H1 (cell line): ENCODE measurements at regions of chr1 and their contacts with region 1.

Region 1: DNA sequence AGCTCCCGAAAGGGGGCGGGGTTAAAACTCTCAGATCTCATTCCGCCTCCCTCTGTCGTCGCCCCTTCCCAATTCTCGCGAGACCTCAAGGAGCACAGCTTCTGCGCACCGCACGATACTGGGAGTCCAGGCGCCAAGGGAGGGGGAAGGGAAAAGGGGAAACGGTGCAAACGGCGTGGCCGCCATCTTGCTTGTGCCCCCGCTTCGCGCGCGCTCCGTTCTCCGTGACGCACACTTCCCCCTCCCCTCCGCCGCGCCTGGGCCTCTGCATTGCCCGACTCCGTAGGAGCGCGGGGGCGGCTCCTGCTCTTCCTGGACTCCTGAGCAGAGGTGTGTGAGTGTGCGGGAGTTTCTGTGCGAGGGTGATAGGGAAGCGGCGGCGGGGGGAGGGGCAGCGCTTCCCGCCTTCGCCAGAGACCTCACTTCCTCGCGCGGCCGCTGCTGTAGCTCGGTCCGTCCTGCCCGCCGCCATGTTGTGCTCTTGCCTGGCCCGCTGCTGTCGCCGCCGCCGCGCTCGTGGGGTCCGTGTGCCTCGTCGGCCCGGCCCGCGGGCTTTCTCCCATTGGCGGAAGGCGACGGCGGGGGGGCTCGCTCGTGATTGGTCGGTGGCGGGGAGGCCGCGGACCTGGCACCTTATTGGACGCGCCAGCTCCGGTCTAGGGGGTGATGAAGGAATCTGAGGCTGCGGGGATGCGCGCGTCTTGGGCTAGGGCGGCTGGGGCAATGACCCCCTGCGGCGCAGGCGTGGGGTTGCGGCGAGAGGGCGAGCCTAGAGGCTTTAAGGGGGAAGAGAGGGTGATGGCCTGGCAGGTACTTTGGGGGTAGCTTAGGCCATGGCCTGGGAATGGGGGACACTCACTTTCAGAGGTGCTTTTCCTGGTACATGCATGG is at the start of gene NFYC:
- DNase-seq: peak; percentile 97
- H3K4me3 ChIP-seq: peak within 1 kb of the TSS; percentile 67 to 82 (median 80)
- H3K27ac ChIP-seq: peak within 1 kb of the TSS; percentile 100
- H3K4me1 ChIP-seq: peaks cover 0 to 9% (median 7%) of the 10 kb centered on the region in 4 experiments; a peak in 6 of 7 replicates
- H3K27me3 ChIP-seq: no peaks in the 10 kb centered on the region
- CTCF ChIP-seq: no peak
- EP300 ChIP-seq: peak in 1 of 2 experiments; percentile 3; a peak in 1 of 3 replicates
- POLR2A ChIP-seq: peak; percentile 93 to 96
- RAD21 ChIP-seq: 0 out of 4 replicates have a peak, but pooled peaks of 1 of the 2 experiments have one; percentile 1
- total RNA-seq, gene NFYC: 51.1 and 54.1 TPM in 2 replicates

Region 2: GRCh38 chr1:40385437-40386358 is 306.1 kb before region 1 on chr1:
- CTCF ChIA-PET with region 1: no interaction called
- POLR2A ChIA-PET with region 1: no interaction called
- DNase-seq: no peak
- H3K4me3 ChIP-seq: no peak overlapping the region
- H3K27ac ChIP-seq: no peak overlapping the region
- H3K4me1 ChIP-seq: peaks cover 0 to 4% (median under 1%) of the 10 kb centered on the region in 4 experiments; a peak in 1 of 7 replicates
- H3K27me3 ChIP-seq: no peaks in the 10 kb centered on the region
- CTCF ChIP-seq: no peak
- EP300 ChIP-seq: no peak
- POLR2A ChIP-seq: no peak
- RAD21 ChIP-seq: no peak

Region 3: GRCh38 chr1:40662864-40663263 is 28.9 kb before region 1 on chr1:
- CTCF ChIA-PET with region 1: interaction called, 3 read pairs
- POLR2A ChIA-PET with region 1: interaction called, 63 read pairs
- DNase-seq: no peak
- H3K4me3 ChIP-seq: no peak overlapping the region
- H3K27ac ChIP-seq: no peak overlapping the region
- H3K4me1 ChIP-seq: peaks cover 0 to 28% (median 15%) of the 10 kb centered on the region in 4 experiments; a peak in 6 of 7 replicates
- H3K27me3 ChIP-seq: no peaks in the 10 kb centered on the region; a peak in 1 of 7 replicates
- CTCF ChIP-seq: no peak
- EP300 ChIP-seq: no peak
- POLR2A ChIP-seq: no peak
- RAD21 ChIP-seq: no peak

Region 4: DNA sequence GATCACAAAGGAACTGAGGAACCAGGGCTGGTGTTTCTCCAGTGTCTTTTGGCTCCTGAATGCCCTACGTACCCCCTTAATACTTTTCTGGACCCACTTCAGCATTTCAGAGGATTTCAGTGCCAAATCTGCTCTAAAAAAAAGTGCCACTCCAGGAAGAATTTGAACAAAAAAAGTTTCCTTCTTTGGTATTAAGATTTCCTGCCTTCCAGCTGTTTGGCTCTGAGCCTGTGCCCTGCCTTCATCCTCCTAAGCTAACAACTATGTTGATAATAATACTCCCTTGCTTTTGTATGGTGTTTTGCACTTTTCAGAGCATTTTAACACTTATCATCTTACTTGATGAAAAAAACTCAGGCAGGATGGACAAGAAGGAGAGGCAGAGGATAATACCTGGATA is 15.3 kb before region 1 on chr1:
- CTCF ChIA-PET with region 1: interaction called, 3 read pairs
- POLR2A ChIA-PET with region 1: interaction called, 39 read pairs
- DNase-seq: no peak
- H3K4me3 ChIP-seq: no peak overlapping the region
- H3K27ac ChIP-seq: no peak overlapping the region
- H3K4me1 ChIP-seq: no peaks in the 10 kb centered on the region
- H3K27me3 ChIP-seq: no peaks in the 10 kb centered on the region
- CTCF ChIP-seq: no peak
- EP300 ChIP-seq: no peak
- POLR2A ChIP-seq: no peak
- RAD21 ChIP-seq: no peak

Region 5: GRCh38 chr1:40722636-40723035 is 30.9 kb after region 1 on chr1:
- CTCF ChIA-PET with region 1: interaction called, 9 read pairs
- POLR2A ChIA-PET with region 1: interaction called, 20 read pairs
- DNase-seq: no peak
- H3K4me3 ChIP-seq: no peak overlapping the region
- H3K27ac ChIP-seq: no peak overlapping the region
- H3K4me1 ChIP-seq: no peaks in the 10 kb centered on the region
- H3K27me3 ChIP-seq: no peaks in the 10 kb centered on the region
- CTCF ChIP-seq: no peak
- EP300 ChIP-seq: no peak
- POLR2A ChIP-seq: no peak
- RAD21 ChIP-seq: 0 out of 4 replicates have a peak, but pooled peaks of 1 of the 2 experiments have one; percentile 9

Region 6: GRCh38 chr1:40745176-40745575 is 53.4 kb after region 1 on chr1:
- CTCF ChIA-PET with region 1: interaction called, 4 read pairs
- POLR2A ChIA-PET with region 1: interaction called, 12 read pairs
- DNase-seq: no peak
- H3K4me3 ChIP-seq: no peak overlapping the region
- H3K27ac ChIP-seq: no peak overlapping the region
- H3K4me1 ChIP-seq: no peaks in the 10 kb centered on the region
- H3K27me3 ChIP-seq: no peaks in the 10 kb centered on the region
- CTCF ChIP-seq: no peak
- EP300 ChIP-seq: no peak
- POLR2A ChIP-seq: no peak
- RAD21 ChIP-seq: no peak

Region 7: GRCh38 chr1:40979233-40980067 is 287.7 kb after region 1 on chr1 and contains the start of gene CTPS1:
- CTCF ChIA-PET with region 1: no interaction called
- POLR2A ChIA-PET with region 1: interaction called, 17 read pairs
- DNase-seq: peak; percentile 67 to 96
- H3K4me3 ChIP-seq: peak within 1 kb of the TSS; percentile 78 to 87 (median 80)
- H3K27ac ChIP-seq: peak within 1 kb of the TSS; percentile 94
- H3K4me1 ChIP-seq: peaks cover 4 to 11% (median 6%) of the 10 kb centered on the region in 4 experiments; a peak in 5 of 7 replicates
- H3K27me3 ChIP-seq: no peaks in the 10 kb centered on the region
- CTCF ChIP-seq: peak; percentile 58 to 68 (median 62)
- EP300 ChIP-seq: no peak; a peak in 1 of 3 replicates
- POLR2A ChIP-seq: peak; percentile 71 to 86
- RAD21 ChIP-seq: no peak
- total RNA-seq, gene CTPS1: 98.4 and 103 TPM in 2 replicates